Cardiac septum (tissue), 1 donor: ENCODE measurements at regions of chr7 and their contacts with region 1.

Region 1: DNA sequence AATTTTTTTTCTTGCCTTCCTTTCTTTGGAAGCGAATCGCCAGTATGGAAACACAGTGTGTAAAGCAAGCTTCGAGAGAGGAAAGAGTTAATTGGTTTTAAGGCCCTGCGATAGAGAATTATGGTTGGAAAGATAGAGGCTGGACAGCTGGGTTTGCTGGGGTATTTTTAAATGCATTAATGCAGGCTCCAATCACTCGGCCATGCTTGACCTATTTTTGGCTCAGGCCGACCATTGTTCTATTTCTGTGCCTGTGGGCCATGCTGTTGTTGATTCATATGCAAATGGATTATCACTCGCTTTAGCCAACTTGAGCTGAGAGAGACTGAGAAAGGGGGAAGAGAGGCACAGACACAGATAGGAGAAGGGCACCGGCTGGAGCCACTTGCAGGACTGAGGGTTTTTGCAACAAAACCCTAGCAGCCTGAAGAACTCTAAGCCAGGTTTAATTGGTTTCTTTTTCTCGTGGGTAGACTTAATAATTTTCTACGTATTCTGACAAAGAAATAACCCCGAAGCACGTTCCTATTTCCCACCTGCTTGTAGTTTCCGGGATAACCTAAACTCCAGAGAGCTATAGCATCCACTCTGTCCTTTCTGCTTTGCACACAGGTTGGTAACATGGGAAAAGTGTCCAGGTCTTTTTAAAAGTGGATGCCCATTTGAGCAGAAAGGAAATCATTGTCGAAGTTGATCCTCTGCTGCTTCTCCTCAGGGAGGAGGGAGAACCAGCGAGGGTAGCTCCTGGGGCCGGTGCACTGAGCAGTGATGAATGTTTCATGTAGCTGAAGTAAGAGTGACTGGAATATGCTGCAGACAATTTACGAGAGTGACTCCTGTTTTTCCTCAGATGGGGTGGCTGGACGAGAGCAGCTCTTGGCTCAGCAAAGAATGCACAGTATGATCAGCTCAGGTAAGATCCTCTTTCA is at the start of gene HDAC9:
- DNase-seq: no peak
- total RNA-seq, gene HDAC9: 87.5 TPM

Region 2: DNA sequence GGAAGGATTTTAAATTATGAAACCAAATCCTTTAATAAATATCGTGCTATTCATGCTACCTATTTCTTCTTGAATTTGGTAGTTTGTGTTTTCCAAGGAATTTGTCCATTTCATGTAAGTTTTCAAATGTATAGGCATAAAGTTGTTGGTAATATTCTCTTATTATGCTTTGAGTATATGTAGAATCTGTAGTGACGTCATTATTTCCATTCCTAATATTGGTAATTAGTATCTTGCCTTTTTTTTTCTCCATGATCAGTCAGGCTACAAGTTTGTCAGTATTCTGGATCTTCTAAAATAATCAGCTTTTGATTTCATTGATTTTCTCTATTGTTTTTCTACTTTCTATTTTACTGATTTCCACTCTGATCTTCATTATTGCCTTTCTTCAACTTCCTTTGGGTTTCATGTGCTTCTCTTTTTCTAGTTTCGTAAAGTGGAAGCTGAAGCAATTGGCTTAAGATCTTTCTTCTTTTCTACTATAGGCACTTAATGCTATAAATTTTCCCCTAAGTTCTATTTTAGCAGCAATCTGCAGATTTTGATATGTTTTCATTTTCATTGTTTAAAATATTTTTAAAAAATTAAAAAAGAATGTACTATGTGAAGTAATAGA is 156.7 kb before region 1 on chr7:
- intact Hi-C with region 1: no loop called
- DNase-seq: no peak

Region 3: DNA sequence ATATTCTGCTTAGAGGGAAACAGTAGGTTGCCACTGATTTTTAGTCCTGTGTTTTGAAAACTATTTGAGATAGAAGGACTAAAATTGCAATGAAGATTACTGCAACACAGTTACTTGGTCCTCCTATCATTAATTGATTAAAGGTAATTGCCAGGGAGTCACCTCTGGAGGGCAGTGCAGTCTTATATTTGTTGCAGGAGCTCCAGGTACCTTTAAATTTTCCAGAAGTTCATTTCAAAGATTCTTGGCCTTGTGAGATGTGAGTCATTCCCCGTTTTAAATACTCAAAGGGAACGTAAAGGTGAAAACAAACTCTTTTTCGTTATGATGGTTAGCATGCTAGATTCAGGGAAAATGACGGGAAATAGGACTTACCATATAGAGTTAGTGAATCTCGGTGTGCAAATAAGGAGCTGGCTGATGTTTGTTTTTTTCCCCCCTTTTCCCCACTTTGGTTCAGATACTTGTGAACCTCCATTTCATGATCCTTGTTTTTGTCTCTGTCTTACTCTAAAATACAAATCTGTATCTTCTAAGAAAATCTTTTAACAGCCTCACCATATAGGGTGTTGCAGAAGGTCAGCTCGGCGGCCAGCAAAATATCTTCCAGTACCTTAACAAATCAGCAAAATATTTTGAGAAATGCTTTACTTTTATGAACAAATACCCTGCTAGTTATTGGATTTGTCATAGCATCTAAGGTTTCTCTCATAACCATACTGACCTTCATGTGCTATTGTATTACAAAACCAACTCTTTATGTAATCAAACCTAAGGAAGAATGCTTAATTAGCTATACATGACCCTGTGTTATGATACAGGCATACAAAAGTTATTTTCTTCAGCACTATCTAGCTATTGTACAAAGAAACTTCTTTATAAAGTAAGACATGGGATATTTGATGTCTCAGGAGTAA is 143.1 kb before region 1 on chr7:
- intact Hi-C with region 1: loop called (anchors 2 kb)
- DNase-seq: no peak

Region 4: GRCh38 chr7:18541181-18541870 is 45.6 kb after region 1 on chr7:
- intact Hi-C with region 1: loop called (anchors 5 kb)
- DNase-seq: peak; percentile 79

Region 5: GRCh38 chr7:18570890-18571478 is 75.3 kb after region 1 on chr7:
- intact Hi-C with region 1: loop called (anchors 5 kb)
- DNase-seq: no peak

Region 6: GRCh38 chr7:18597754-18598153 is 102.1 kb after region 1 on chr7:
- intact Hi-C with region 1: no loop called
- DNase-seq: no peak